ENCODE measurements at regions of chr22 and their contacts with region 1.

Region 1: GRCh38 chr22:41526837-41527799 is 17.2 kb downstream of the POLR3H start:
- DNase-seq: peak in 1 of 2 donors; percentile 88
- ATAC-seq: peak; percentile 54
- H3K4me3 ChIP-seq: no peak overlapping the region
- H3K27ac ChIP-seq: peak overlapping the region in 1 of 2 donors; percentile 13
- H3K4me1 ChIP-seq: no peaks in the 10 kb centered on the region
- H3K27me3 ChIP-seq: no peaks in the 10 kb centered on the region

Region 2: GRCh38 chr22:41285820-41286638 is 241.1 kb before region 1 on chr22 and contains the start of gene RANGAP1:
- intact Hi-C with region 1: loop called in 1 of 2 experiments (anchors 10 kb)
- DNase-seq: peak; percentile 99
- ATAC-seq: peak; percentile 100
- H3K4me3 ChIP-seq: peak within 1 kb of the TSS; percentile 53 to 78
- H3K27ac ChIP-seq: peak within 1 kb of the TSS in 1 of 2 donors; percentile 37
- H3K4me1 ChIP-seq: no peaks in the 10 kb centered on the region
- H3K27me3 ChIP-seq: no peaks in the 10 kb centered on the region
- total RNA-seq, gene RANGAP1: 29.7 to 34.6 TPM

Region 3: DNA sequence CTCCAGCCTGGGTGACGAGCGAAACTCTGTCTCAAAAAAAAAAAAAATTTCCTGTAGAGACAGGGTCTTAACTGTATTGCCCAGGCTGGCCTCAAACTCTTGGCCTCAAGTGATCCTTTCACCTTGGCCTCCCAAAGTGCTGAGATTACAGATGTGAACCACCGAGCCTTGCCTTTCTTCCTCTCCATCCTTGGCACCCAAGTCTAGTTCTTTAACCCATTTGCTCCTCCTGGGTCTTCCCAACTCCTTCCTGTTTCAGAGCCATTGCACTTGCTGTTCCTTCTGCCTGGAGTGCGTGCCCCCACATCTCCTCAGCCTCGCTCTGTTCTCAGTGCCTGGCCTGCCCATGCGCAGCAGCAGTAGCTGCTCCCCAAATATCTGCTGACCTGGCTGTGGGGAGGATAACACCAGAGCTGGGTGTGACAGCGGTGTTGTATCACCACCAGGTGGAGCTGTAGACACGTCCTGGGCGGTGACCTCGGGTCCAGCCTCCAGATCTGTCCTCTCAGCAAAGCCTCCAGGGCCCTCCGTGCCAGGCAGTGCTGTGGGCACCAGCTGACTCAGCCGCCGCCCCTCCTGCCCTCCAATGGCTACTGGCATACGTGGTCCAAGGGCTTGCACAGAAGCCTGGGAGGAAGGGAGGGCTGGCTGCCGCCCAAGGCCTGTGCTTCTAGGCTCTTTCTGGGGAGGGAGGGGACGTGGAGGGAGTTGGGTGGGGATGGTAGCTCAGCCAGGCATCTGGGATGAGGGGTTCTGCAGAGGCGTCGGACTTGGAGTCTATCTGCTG is 123.4 kb before region 1 on chr22:
- intact Hi-C with region 1: loop called in 1 of 2 experiments (anchors 2 kb)
- DNase-seq: peak; percentile 97
- ATAC-seq: peak; percentile 96
- H3K4me3 ChIP-seq: no peak overlapping the region
- H3K27ac ChIP-seq: peak overlapping the region in 1 of 2 donors; percentile 30
- H3K4me1 ChIP-seq: no peaks in the 10 kb centered on the region
- H3K27me3 ChIP-seq: no peaks in the 10 kb centered on the region

Region 4: GRCh38 chr22:41479671-41480396 is 47.3 kb before region 1 on chr22:
- intact Hi-C with region 1: loop called in 1 of 2 experiments (anchors 5 kb)
- DNase-seq: peak; percentile 61 to 68
- ATAC-seq: peak; percentile 65
- H3K4me3 ChIP-seq: no peak overlapping the region
- H3K27ac ChIP-seq: peak overlapping the region in 1 of 2 donors; percentile 93
- H3K4me1 ChIP-seq: peaks cover 3 to 4% of the 10 kb centered on the region in 2 donors
- H3K27me3 ChIP-seq: no peaks in the 10 kb centered on the region

Measured in aorta (tissue), 5 donors.